ENCODE measurements at regions of chr12 and their contacts with region 1.

Region 1: DNA sequence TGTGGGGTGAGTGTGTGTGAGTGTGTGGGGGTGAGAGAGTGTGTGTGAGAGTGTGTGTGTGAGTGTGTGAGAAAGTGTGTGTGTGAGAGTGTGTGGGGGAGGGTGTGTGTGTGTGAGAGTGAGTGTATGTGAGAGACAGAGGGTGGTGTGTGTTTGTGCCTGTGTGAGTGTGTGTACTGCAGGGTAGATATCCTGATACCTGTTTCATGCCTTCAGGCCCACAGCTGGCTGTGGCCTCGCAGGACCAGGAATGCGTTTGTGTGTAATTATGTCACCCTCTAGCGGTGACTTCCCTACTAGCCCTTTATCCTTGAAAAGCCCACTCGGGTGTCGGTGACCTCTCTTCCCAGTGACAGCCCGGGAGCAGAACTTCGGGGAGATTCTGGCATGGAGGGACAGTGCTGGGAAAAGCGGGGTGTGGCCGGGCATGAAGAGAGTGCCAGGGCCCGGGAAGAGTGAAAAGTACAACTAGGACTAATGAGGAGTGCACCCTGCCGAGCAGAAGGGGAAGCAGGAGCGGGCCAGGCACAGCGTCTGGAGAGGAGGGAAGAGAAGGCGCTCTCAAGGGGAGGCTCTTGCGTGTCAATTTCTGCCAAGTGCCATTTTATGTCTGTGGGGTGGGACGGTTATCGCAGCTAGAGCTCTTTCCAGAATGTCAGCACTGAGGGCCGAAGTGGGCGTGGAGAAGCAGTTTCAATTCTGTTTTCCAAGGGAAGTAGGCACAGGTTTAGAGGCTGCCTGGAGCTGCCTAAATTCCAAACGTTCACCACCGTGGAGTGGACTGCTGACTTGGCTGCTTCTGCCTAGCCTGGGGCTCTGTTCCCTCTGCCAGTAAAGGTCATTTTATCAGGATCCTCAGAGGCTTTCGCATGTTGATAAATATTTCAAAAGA is 11.0 kb upstream of the FBXL14 start:
- DNase-seq: no peak
- ATAC-seq: peak; percentile 73
- H3K4me3 ChIP-seq: peak overlapping the region; percentile 61; the same call in 1 of the 2 replicates
- H3K27ac ChIP-seq: peak overlapping the region; percentile 79
- H3K4me1 ChIP-seq: peaks cover 48% of the 10 kb centered on the region
- H3K27me3 ChIP-seq: no peaks in the 10 kb centered on the region
- CTCF ChIP-seq: peak; percentile 75 to 93 (median 79)
- EP300 ChIP-seq: no peak
- POLR2A ChIP-seq: no peak; the same call in 1 of the 2 replicates
- RAD21 ChIP-seq: peak; percentile 75

Region 2: GRCh38 chr12:1422604-1423315 is 182.6 kb before region 1 on chr12:
- CTCF ChIA-PET with region 1: interaction called, 3 read pairs
- POLR2A ChIA-PET with region 1: no interaction called
- RAD21 ChIA-PET with region 1: no interaction called
- SMC1A ChIA-PET with region 1: no interaction called
- in situ Hi-C with region 1: no loop called
- intact Hi-C with region 1: loop called (anchors 5 kb)
- DNase-seq: peak; percentile 83
- ATAC-seq: peak; percentile 98
- H3K4me3 ChIP-seq: no peak overlapping the region
- H3K27ac ChIP-seq: peak overlapping the region; percentile 75
- H3K4me1 ChIP-seq: no peaks in the 10 kb centered on the region
- H3K27me3 ChIP-seq: no peaks in the 10 kb centered on the region
- CTCF ChIP-seq: no peak
- EP300 ChIP-seq: peak; percentile 46 to 57; a peak in 3 of 4 replicates
- POLR2A ChIP-seq: no peak
- RAD21 ChIP-seq: no peak

Region 3: DNA sequence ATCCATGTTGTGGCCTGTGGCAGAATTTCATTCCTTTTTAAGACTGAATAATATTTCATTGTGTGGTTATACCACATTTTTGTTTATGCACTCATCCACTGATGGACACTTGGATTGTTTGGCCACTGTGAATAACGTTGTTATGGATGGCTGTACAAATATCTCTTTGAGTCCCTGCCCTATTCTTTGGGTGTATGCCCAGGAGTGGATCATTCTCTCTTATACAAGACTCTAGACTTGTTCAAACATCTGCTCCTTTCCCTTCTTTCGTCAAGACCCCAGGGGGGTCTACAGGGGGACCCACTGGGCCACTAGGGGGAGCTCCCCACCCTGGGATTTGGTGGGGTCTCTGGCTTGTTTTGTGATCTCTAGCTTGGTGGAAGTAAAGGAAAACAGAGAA is 88.4 kb before region 1 on chr12:
- CTCF ChIA-PET with region 1: interaction called, 16 read pairs
- POLR2A ChIA-PET with region 1: no interaction called
- RAD21 ChIA-PET with region 1: interaction called, 4 read pairs
- SMC1A ChIA-PET with region 1: interaction called, 17 read pairs
- in situ Hi-C with region 1: no loop called
- intact Hi-C with region 1: no loop called
- DNase-seq: no peak
- ATAC-seq: peak; percentile 83
- H3K4me3 ChIP-seq: no peak overlapping the region
- H3K27ac ChIP-seq: no peak overlapping the region
- H3K4me1 ChIP-seq: no peaks in the 10 kb centered on the region
- H3K27me3 ChIP-seq: no peaks in the 10 kb centered on the region
- CTCF ChIP-seq: peak; percentile 50 to 78 (median 71)
- EP300 ChIP-seq: no peak
- POLR2A ChIP-seq: no peak
- RAD21 ChIP-seq: peak; percentile 69

Region 4: GRCh38 chr12:1594261-1595025 is 10.9 kb before region 1 on chr12 and contains the start of gene FBXL14:
- CTCF ChIA-PET with region 1: interaction called, 38 read pairs
- POLR2A ChIA-PET with region 1: interaction called, 23 read pairs
- RAD21 ChIA-PET with region 1: interaction called, 29 read pairs
- SMC1A ChIA-PET with region 1: interaction called, 46 read pairs
- in situ Hi-C with region 1: no loop called
- intact Hi-C with region 1: no loop called
- DNase-seq: no peak
- ATAC-seq: peak; percentile 66
- H3K4me3 ChIP-seq: peak within 1 kb of the TSS; percentile 97
- H3K27ac ChIP-seq: peak within 1 kb of the TSS; percentile 34
- H3K4me1 ChIP-seq: peaks cover 11% of the 10 kb centered on the region
- H3K27me3 ChIP-seq: no peaks in the 10 kb centered on the region
- CTCF ChIP-seq: no peak
- EP300 ChIP-seq: no peak
- POLR2A ChIP-seq: peak; percentile 55
- RAD21 ChIP-seq: no peak
- polyA plus RNA-seq, gene FBXL14: 0.44 to 0.64 TPM

Region 5: DNA sequence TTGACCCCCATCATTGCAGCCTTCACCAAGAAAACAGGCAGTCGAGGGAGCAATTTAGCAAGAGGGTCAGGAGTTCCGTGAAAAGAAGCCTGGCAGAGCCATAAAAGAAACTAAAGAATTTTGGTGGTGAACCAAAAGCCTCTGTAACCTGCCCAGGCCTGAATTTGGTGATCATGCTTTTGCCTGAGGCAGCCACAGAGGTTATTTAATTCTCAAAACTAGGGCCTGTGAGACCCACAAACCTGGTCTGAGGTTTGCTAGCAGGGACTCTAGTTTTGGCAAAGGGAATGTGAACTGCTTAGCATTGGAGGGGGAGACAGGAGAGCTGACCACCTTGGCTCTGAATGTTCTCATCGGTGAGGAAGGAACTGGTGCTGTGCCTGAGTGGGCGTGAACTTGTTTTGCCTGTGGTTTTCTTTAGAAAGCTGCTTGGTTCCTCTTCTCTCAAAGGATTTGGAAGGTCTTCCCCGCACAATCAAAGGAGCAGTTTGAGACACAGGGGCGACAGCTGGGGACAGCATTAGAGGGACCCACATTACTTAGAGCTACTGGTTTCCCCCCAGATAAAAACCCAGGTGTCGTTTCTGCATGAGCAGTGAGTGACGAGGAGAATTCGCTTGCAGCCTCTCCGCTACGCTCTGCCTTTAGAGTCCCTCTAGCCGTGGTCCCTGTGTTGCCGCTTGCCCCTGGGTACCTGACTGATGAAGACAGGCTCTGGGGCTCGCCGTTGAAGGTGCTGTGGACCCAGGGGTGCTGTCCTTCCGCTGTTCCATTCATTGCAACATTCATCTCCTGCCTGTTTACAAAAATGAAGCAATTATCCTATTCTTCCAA is 11.1 kb after region 1 on chr12:
- CTCF ChIA-PET with region 1: interaction called, 10 read pairs
- POLR2A ChIA-PET with region 1: interaction called, 5 read pairs
- RAD21 ChIA-PET with region 1: interaction called, 7 read pairs
- SMC1A ChIA-PET with region 1: interaction called, 11 read pairs
- in situ Hi-C with region 1: no loop called
- intact Hi-C with region 1: no loop called
- DNase-seq: no peak
- ATAC-seq: peak; percentile 59
- H3K4me3 ChIP-seq: peak overlapping the region; percentile 27; the same call in 1 of the 2 replicates
- H3K27ac ChIP-seq: no peak overlapping the region
- H3K4me1 ChIP-seq: peaks cover 26% of the 10 kb centered on the region
- H3K27me3 ChIP-seq: no peaks in the 10 kb centered on the region
- CTCF ChIP-seq: no peak
- EP300 ChIP-seq: no peak
- POLR2A ChIP-seq: no peak
- RAD21 ChIP-seq: no peak

Region 6: DNA sequence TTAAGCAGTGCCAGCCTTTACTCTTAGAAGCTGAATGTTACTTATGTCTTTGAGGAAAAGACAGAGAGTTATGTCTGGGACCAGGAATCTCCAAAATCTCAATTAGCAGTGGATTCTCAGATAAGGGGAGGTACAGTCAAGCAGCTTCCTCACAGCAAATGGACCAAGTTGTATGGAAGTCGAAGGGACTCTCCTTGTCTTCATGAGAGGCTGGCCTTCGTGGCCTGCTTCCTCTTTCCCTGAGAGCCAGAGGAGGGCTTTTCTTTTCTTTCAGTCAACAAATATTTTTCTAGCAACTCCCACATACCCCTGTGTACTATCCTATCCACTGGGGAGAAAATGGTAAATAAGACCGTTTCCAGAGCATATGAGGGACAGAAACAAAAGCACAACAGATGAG is 17.0 kb after region 1 on chr12:
- CTCF ChIA-PET with region 1: interaction called, 10 read pairs
- POLR2A ChIA-PET with region 1: interaction called, 5 read pairs
- RAD21 ChIA-PET with region 1: interaction called, 7 read pairs
- SMC1A ChIA-PET with region 1: interaction called, 5 read pairs
- in situ Hi-C with region 1: no loop called
- intact Hi-C with region 1: no loop called
- DNase-seq: no peak
- ATAC-seq: no peak
- H3K4me3 ChIP-seq: no peak overlapping the region
- H3K27ac ChIP-seq: no peak overlapping the region
- H3K4me1 ChIP-seq: peaks cover 15% of the 10 kb centered on the region
- H3K27me3 ChIP-seq: no peaks in the 10 kb centered on the region
- CTCF ChIP-seq: no peak
- EP300 ChIP-seq: no peak
- POLR2A ChIP-seq: no peak
- RAD21 ChIP-seq: no peak

Measured in GM12878 (cell line).